ENCODE measurements at regions of chr12 and their contacts with region 1.

Region 1: GRCh38 chr12:93813972-93814821 is 137.0 kb downstream of the CRADD start:
- DNase-seq: peak; percentile 79 to 91 (median 80)
- ATAC-seq: peak; percentile 91 to 93 (median 92)
- H3K4me3 ChIP-seq: peak overlapping the region in 6 of 12 donors; percentile 6 to 37 (median 14)
- H3K27ac ChIP-seq: peak overlapping the region; percentile 81 to 95 (median 88)
- H3K4me1 ChIP-seq: peaks cover 9 to 68% (median 50%) of the 10 kb centered on the region in 12 donors
- H3K27me3 ChIP-seq: no peaks in the 10 kb centered on the region
- CTCF ChIP-seq: no peak
- POLR2A ChIP-seq: no peak

Region 2: DNA sequence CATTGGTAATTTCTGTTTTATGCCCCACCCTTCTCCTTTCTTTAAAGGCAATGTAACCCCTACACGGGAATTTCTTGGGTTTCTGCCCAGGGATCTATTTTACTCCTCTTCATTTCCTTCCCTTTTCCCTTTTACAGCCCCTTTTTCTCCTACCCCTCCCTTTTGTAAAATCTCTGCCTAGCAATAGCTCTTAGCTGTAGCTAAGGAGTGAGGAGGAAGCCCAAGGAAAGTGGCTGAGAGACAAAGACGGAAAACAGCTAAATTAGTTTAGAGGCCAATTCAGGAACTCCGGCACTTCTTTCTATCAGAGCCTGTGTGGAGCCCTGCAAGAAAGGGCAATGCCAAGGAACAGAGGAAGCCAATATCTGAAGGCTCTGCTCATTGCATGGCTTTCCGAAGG is 201.4 kb before region 1 on chr12:
- intact Hi-C with region 1: no loop called
- DNase-seq: no peak
- ATAC-seq: no peak
- H3K4me3 ChIP-seq: no peak overlapping the region
- H3K27ac ChIP-seq: no peak overlapping the region
- H3K4me1 ChIP-seq: peaks cover 0 to 15% (median 0%) of the 10 kb centered on the region in 12 donors
- H3K27me3 ChIP-seq: no peaks in the 10 kb centered on the region
- CTCF ChIP-seq: no peak
- POLR2A ChIP-seq: no peak

Region 3: DNA sequence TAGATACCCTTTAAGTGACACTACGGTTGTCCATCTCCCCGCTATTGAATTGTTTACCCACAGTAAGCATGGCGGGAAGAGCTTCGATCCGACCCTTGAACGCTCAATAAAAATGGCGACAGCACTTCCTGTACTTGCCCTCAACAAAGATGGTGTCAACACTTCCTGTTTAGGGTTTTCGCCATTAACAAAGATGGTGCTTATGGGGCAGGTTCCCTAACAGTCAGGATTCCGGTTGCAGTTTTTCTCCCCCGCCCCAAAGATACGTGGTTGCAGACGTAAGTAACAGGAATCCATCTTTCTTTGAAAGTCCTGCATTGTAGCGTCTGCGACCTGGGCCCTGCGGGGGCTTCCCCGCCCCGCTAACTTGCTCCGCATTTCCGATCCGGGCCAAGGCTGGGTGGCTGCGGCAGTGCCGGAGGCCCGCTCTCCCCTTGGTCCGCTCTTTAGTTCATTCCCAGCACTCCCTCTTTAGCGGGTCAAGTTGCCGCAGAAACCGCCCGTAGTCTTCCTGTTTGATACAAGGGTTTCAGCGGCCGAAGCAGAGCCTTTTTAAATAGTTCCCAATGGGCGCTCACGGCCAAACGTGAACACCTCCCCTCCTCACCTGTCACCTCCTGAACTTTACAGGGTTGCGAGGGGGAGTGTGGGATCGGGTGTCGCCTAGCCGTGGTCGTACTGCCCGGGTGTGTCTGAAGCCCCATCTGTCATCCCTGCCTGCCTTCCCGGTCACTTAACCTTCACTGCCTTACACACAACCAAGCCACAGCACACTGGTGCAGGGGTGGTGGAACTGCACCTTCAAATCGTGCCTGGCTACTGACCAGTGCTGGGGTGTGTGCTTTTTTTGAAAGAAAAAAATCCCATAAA is 136.8 kb before region 1 on chr12 and contains the start of gene CRADD:
- intact Hi-C with region 1: loop called in 2 of 10 experiments (anchors 5 to 10 kb)
- DNase-seq: peak; percentile 79 to 90 (median 83)
- ATAC-seq: peak; percentile 86 to 94 (median 92)
- H3K4me3 ChIP-seq: peak within 1 kb of the TSS; percentile 36 to 84 (median 70)
- H3K27ac ChIP-seq: peak within 1 kb of the TSS; percentile 84 to 100 (median 97)
- H3K4me1 ChIP-seq: peaks cover 0 to 52% (median 24%) of the 10 kb centered on the region in 12 donors
- H3K27me3 ChIP-seq: no peaks in the 10 kb centered on the region
- CTCF ChIP-seq: no peak
- POLR2A ChIP-seq: peak in 1 of 2 donors; percentile 73
- total RNA-seq, gene CRADD: 40.1 to 100 (median 56.1) TPM

Region 4: DNA sequence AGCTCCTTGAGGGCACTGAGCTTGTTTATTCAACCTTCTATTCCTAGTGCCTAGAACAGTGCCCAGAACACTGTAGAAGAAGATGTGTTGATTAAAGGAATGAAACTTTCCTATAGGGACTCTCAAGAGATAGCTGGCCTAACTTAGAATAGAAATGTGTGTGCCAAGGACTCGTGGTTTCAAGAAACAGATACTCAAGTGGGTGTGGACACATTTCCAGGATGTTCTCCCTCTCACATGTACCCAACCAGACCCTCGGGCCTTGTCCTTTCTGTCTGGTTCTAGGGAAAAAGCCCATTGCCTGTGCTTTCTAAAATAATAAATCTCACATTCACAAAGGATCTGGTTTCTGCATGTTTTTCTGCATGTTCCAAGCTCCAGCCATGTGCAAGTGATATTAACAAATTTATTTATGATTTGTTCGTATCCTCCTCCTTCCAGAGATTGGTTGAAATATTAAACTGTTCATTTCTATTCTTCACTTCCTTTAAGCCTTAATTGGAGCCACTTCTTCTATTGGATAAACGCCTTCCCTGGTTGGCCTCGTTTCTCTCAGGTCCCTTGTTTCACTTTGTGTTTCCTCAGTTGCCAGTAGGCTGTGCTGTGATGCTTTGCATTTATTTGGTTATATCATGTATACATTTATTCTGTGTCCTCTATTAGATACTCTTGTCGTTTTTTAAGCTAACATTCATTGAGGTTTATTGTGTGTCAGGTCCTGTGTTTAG is 47.2 kb before region 1 on chr12:
- intact Hi-C with region 1: loop called in 1 of 10 experiments (anchors 5 kb)
- DNase-seq: peak in 4 of 5 donors; percentile 37 to 60 (median 50)
- ATAC-seq: peak; percentile 79 to 88 (median 82)
- H3K4me3 ChIP-seq: peak overlapping the region in 1 of 12 donors; percentile 5
- H3K27ac ChIP-seq: peak overlapping the region; percentile 27 to 72 (median 55)
- H3K4me1 ChIP-seq: peaks cover 0 to 56% (median 42%) of the 10 kb centered on the region in 12 donors
- H3K27me3 ChIP-seq: no peaks in the 10 kb centered on the region
- CTCF ChIP-seq: peak; percentile 38 to 81 (median 64)
- POLR2A ChIP-seq: no peak

Region 5: DNA sequence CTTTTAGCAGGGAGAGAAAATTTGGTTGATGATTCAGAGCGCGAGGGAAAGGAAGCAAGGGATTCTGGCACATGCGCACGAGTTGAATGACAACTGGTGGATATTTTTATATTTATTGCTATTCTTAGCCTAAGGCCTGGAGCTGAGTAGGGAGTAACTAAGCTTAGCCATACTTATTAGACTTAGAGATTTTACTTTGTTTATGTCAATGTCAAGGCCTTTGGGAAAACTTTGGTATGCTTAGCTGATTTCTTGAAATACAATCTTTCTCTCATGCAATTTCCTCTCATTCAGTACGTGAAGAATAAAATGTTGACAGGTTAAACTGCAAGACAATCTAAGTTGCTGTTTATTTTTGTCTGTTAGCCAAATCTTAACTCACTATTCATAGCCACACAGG is 35.9 kb before region 1 on chr12:
- intact Hi-C with region 1: loop called in 3 of 10 experiments (anchors 2 to 5 kb)
- DNase-seq: peak in 4 of 5 donors; percentile 66 to 80 (median 72)
- ATAC-seq: peak; percentile 83 to 92 (median 88)
- H3K4me3 ChIP-seq: peak overlapping the region in 5 of 12 donors; percentile 1 to 12 (median 9)
- H3K27ac ChIP-seq: peak overlapping the region; percentile 74 to 92 (median 84)
- H3K4me1 ChIP-seq: peaks cover 12 to 54% (median 45%) of the 10 kb centered on the region in 12 donors
- H3K27me3 ChIP-seq: no peaks in the 10 kb centered on the region
- CTCF ChIP-seq: no peak
- POLR2A ChIP-seq: no peak

Region 6: GRCh38 chr12:93785262-93786010 is 28.8 kb before region 1 on chr12:
- intact Hi-C with region 1: loop called in 2 of 10 experiments (anchors 2 kb)
- DNase-seq: peak in 4 of 5 donors; percentile 40 to 78 (median 52)
- ATAC-seq: peak; percentile 77 to 96 (median 94)
- H3K4me3 ChIP-seq: no peak overlapping the region
- H3K27ac ChIP-seq: peak overlapping the region; percentile 69 to 96 (median 84)
- H3K4me1 ChIP-seq: peaks cover 2 to 50% (median 39%) of the 10 kb centered on the region in 12 donors
- H3K27me3 ChIP-seq: no peaks in the 10 kb centered on the region
- CTCF ChIP-seq: no peak
- POLR2A ChIP-seq: no peak